Left ventricle myocardium inferior (tissue), 1 donor: ENCODE measurements at regions of chr4 and their contacts with region 1.

Region 1: GRCh38 chr4:64539234-64539849 is 130.1 kb upstream of the TECRL start:
- DNase-seq: no peak
- H3K4me3 ChIP-seq: peak overlapping the region; percentile 15
- H3K27ac ChIP-seq: peak overlapping the region; percentile 45
- H3K4me1 ChIP-seq: peaks cover 6% of the 10 kb centered on the region
- H3K27me3 ChIP-seq: no peaks in the 10 kb centered on the region
- CTCF ChIP-seq: peak; percentile 79

Region 2: DNA sequence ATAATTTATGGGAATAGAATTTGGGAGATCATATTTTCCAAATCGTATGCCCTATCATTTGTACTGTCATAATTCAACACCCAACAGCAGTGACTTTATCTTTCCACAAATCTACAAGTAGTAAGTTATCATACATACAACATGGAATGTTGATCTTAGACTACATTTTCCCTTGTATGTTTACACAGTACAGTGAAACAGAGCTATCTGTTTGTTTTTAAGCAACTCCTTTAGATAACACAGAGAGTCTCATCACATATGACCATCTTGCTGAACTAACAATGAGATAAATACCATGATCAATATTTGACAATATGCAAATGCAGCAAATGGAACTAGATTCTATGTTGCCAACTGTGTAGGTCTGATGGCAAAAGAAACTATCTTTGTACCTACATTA is 376.3 kb before region 1 on chr4:
- intact Hi-C with region 1: loop called (anchors 10 kb)
- DNase-seq: no peak
- H3K4me3 ChIP-seq: no peak overlapping the region
- H3K27ac ChIP-seq: no peak overlapping the region
- H3K4me1 ChIP-seq: no peaks in the 10 kb centered on the region
- H3K27me3 ChIP-seq: no peaks in the 10 kb centered on the region
- CTCF ChIP-seq: no peak